ENCODE measurements at regions of chr1 and their contacts with region 1.

Region 1: GRCh38 chr1:108828022-108828961 is 28.6 kb downstream of the AKNAD1 start:
- DNase-seq: peak; percentile 79
- H3K4me3 ChIP-seq: no peak overlapping the region
- H3K27ac ChIP-seq: no peak overlapping the region
- H3K4me1 ChIP-seq: no peaks in the 10 kb centered on the region
- CTCF ChIP-seq: peak; percentile 92

Region 2: DNA sequence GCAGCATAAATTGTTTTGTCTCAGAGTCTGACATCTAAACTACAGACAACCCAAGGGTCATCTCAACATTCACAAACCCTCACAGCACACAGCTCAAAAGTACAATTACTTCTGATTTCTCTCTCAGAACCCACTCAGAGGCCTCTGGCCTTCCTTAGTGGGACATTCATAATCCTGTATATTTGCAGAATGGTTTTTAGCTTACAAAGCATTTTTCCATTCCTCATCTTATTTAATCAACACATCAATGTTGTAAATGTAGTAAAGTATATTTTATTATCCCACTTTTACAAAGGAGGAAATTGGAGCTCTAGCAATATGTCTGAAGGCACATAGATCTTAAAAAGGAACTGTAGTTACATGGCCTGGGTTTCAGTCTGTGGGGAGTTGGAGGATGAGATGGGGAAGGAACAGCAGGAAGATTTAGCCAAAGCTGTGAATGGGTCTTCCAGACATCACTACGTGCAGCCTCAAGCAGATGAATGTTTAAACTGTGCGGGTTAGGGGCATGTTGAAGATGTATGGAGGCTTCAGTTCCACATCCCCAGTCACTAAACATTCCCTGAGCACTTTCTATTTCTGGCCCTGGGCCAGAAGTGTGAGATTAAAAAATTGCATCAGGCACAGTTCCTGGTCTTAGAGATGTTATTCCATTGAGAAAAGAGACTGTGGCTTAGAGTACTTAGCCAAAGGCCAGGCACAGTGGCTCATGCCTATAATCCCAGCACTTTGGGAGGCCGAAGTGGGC is 15.3 kb after region 1 on chr1:
- CTCF ChIA-PET with region 1: no interaction called
- POLR2A ChIA-PET with region 1: interaction called, 12 read pairs
- intact Hi-C with region 1: no loop called
- DNase-seq: no peak
- H3K4me3 ChIP-seq: no peak overlapping the region
- H3K27ac ChIP-seq: no peak overlapping the region
- H3K4me1 ChIP-seq: no peaks in the 10 kb centered on the region
- CTCF ChIP-seq: no peak

Region 3: DNA sequence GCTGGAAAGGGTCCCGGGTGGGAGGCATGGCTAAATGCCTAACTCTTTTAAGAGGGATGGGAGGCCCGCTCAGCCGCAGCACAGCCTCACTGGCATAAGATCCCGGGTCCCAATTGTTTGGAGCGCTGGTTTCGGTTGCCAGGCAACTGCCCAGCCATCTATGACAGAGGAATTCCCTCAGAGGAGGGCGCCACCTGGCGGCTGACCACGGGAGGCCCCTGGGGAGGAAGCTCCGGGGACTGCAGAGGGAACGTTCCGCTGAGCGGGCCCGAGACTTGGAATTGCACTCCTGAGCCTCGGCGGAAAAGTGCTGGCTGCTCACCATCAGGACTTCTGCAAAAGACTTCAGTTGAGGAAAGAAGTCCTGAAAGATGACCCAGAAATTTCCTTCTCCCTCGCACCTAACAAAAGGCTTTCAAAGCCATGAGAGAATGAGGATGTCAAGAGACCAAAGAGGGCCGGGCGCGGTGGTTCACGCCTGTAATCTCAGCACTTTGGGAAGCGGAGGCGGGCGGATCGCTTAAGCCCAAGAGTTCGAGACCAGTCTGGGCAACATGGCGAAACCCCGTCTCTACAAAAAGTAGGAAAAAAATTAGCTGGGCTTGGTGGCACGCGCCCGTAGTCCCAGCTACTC is 284.5 kb after region 1 on chr1:
- CTCF ChIA-PET with region 1: interaction called, 3 read pairs
- POLR2A ChIA-PET with region 1: interaction called, 3 read pairs
- intact Hi-C with region 1: loop called (anchors 1 kb)
- DNase-seq: peak; percentile 83
- H3K4me3 ChIP-seq: peak overlapping the region; percentile 16
- H3K27ac ChIP-seq: no peak overlapping the region
- H3K4me1 ChIP-seq: peaks cover 13% of the 10 kb centered on the region
- CTCF ChIP-seq: peak; percentile 95